ENCODE measurements at regions of chr18 and their contacts with region 1.

Region 1: GRCh38 chr18:60110836-60111235 is 211.0 kb downstream of the PMAIP1 start:
- DNase-seq: no peak
- ATAC-seq: no peak
- H3K4me3 ChIP-seq: no peak overlapping the region
- H3K27ac ChIP-seq: no peak overlapping the region
- H3K4me1 ChIP-seq: no peaks in the 10 kb centered on the region
- H3K27me3 ChIP-seq: no peaks in the 10 kb centered on the region
- CTCF ChIP-seq: no peak

Region 2: DNA sequence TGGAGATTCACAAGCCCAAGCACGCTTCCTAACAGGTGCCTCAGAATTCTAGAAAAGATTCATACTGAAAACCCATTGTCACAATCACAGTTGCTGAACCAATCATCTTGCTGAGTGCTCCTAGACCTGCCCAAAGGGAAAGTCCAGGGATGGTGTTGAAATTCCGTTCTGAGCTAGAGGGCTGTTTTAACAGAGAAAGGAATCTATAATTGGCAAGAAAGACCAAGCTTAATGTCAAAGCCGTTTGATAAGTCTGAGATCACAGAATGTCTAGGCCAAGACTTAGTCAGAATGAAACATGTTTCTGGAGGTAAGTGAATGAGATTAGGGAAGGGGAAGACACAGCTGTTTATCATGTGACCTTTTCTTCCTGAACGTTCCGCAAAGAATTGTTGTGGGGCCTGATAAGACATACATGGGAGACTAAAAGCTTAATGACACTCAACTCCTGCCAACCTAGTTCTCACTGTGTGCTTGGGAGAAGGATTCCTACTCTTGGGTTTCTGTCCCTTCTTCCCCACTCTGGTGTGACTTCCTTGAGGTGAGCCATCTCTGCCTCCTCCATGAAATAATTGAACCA is 183.5 kb before region 1 on chr18:
- CTCF ChIA-PET with region 1: no interaction called
- POLR2A ChIA-PET with region 1: no interaction called
- in situ Hi-C with region 1: no loop called
- intact Hi-C with region 1: no loop called
- DNase-seq: no peak
- ATAC-seq: no peak
- H3K4me3 ChIP-seq: no peak overlapping the region
- H3K27ac ChIP-seq: no peak overlapping the region
- H3K4me1 ChIP-seq: no peaks in the 10 kb centered on the region
- H3K27me3 ChIP-seq: no peaks in the 10 kb centered on the region
- CTCF ChIP-seq: no peak

Region 3: DNA sequence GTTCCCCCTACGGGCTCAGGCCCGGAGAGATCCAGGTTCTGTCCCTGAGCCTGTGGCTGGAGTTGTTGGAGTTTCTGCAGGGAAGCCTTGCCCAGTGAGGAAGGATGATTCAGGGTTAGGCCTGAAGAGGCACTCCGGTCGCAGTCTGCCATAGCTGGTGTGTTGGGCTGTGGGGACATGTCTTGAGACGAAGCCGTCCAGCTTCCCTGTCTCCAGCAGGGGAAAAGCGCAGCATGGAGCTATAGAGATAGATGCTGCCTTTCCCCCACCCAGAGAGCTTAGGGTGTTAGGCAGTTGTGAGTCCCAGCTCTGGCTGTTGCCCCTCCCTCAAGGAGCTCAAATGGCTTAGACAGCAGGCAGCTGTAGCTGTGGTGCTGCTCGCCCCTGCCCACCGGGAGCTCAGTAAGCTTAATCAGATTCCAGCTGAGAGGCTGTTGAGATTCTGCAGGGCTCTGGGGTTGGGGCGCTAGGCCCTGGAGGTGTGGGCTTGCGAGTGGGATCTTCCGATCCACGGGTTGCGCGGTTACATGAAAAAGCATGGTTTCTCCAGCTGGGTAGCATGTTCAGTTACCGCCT is 107.1 kb before region 1 on chr18:
- CTCF ChIA-PET with region 1: no interaction called
- POLR2A ChIA-PET with region 1: no interaction called
- in situ Hi-C with region 1: no loop called
- intact Hi-C with region 1: no loop called
- DNase-seq: no peak
- ATAC-seq: no peak
- H3K4me3 ChIP-seq: no peak overlapping the region
- H3K27ac ChIP-seq: no peak overlapping the region
- H3K4me1 ChIP-seq: no peaks in the 10 kb centered on the region
- H3K27me3 ChIP-seq: no peaks in the 10 kb centered on the region
- CTCF ChIP-seq: no peak

Region 4: GRCh38 chr18:60189856-60190255 is 79.0 kb after region 1 on chr18:
- CTCF ChIA-PET with region 1: no interaction called
- POLR2A ChIA-PET with region 1: interaction called, 11 read pairs
- in situ Hi-C with region 1: no loop called
- intact Hi-C with region 1: no loop called
- DNase-seq: no peak
- ATAC-seq: no peak
- H3K4me3 ChIP-seq: no peak overlapping the region
- H3K27ac ChIP-seq: no peak overlapping the region
- H3K4me1 ChIP-seq: no peaks in the 10 kb centered on the region
- H3K27me3 ChIP-seq: no peaks in the 10 kb centered on the region
- CTCF ChIP-seq: no peak

Measured in Panc1 (cell line).